Aorta (tissue), 5 donors: ENCODE measurements at regions of chr4 and their contacts with region 1.

Region 1: DNA sequence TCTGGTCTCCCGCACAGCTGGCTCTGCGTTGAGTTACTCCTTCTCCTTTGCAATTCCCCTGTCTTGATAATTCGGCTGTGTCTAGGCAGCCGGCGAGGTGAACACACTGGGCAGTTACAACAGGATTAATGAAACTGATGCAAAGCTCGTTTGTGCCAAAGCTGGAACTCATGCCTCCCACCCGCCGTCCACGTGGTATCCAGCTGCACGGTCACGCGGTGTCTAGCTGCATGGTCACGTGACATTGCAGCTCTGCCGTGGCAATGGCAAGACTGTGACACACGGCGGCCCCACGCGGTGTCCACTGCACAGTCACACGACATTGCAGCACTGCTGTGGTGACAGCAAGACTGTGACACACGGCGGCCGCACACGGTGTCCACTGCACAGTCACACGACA is 31.2 kb upstream of the LRPAP1 start:
- DNase-seq: peak in 1 of 2 donors; percentile 34
- ATAC-seq: no peak
- H3K4me3 ChIP-seq: no peak overlapping the region
- H3K27ac ChIP-seq: no peak overlapping the region
- H3K4me1 ChIP-seq: no peaks in the 10 kb centered on the region
- H3K27me3 ChIP-seq: no peaks in the 10 kb centered on the region

Region 2: GRCh38 chr4:3148926-3149325 is 414.5 kb before region 1 on chr4:
- intact Hi-C with region 1: no loop called
- DNase-seq: no peak
- ATAC-seq: no peak
- H3K4me3 ChIP-seq: no peak overlapping the region
- H3K27ac ChIP-seq: no peak overlapping the region
- H3K4me1 ChIP-seq: no peaks in the 10 kb centered on the region
- H3K27me3 ChIP-seq: peaks cover 0 to 1% of the 10 kb centered on the region in 2 donors

Region 3: DNA sequence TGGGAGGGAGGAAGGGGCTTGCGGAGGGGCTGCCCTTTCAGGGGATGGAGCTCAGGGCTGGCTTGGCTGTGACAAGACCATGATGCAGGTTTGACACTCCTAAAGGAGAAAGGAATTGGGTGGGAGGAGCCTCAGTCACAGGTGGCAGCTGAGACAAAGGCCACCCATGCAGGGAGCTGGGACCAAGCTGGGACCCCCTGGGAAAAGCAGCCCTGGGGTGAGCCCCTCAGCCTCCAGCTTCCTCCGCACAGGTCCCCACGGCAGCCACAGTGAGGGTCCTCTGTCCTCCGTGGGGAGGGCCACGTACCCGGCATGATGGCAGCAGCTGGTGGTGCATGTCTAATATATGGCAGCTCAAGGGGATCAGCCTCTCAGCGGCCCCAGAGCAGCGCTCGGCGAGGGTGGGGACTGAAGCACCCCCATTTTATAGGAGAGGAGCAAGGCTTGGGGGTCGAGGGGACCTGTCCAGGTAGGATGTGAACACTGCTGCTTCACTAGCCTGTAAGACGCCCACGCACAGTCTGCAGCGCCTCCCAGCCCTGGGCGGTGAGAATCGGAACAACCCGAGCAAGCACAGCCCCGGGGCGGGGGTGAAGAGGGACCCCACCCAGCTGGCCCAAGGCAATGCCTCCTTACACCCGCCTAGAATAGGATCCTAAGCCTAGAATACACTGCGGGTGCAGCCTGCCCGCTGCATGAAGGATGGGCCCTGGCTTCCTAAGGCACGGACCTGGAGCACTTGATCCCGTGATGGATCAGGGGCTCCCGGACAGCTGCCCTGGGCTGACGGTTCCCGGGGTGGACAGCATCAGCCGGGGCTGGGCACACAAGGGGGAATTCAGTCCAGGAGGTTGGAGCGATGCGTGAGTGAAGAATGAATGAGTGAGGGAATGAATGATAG is 220.3 kb after region 1 on chr4:
- intact Hi-C with region 1: loop called in 1 of 2 experiments (anchors 10 kb)
- DNase-seq: no peak
- ATAC-seq: no peak
- H3K4me3 ChIP-seq: no peak overlapping the region
- H3K27ac ChIP-seq: no peak overlapping the region
- H3K4me1 ChIP-seq: no peaks in the 10 kb centered on the region
- H3K27me3 ChIP-seq: no peaks in the 10 kb centered on the region